ENCODE measurements at regions of chr1 and their contacts with region 1.

Region 1: DNA sequence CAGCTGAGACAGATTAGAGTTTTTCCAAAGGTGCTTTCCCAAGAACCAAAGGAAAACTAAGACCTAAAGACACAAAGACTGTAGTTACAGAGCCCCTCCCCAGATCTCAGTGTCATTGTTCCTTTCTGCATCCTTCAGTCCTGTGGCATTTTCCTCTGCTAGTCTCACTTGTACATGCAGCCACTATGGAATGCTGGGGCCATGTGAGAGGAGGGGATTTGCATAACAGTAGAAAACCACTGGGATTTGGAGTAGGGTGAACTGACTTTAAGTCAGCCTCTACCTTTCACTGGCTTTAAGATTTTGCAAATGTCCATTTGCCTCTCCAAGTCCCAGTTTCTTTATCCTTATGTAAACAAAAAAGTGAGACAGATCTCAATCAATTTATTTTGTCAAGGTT is 119.4 kb upstream of the F3 start:
- DNase-seq: no peak
- ATAC-seq: no peak
- H3K4me3 ChIP-seq: no peak overlapping the region
- H3K27ac ChIP-seq: peak overlapping the region in 1 of 10 donors; percentile 6
- H3K4me1 ChIP-seq: peaks cover 0 to 22% (median 13%) of the 10 kb centered on the region in 9 donors
- H3K27me3 ChIP-seq: no peaks in the 10 kb centered on the region
- CTCF ChIP-seq: no peak

Region 2: DNA sequence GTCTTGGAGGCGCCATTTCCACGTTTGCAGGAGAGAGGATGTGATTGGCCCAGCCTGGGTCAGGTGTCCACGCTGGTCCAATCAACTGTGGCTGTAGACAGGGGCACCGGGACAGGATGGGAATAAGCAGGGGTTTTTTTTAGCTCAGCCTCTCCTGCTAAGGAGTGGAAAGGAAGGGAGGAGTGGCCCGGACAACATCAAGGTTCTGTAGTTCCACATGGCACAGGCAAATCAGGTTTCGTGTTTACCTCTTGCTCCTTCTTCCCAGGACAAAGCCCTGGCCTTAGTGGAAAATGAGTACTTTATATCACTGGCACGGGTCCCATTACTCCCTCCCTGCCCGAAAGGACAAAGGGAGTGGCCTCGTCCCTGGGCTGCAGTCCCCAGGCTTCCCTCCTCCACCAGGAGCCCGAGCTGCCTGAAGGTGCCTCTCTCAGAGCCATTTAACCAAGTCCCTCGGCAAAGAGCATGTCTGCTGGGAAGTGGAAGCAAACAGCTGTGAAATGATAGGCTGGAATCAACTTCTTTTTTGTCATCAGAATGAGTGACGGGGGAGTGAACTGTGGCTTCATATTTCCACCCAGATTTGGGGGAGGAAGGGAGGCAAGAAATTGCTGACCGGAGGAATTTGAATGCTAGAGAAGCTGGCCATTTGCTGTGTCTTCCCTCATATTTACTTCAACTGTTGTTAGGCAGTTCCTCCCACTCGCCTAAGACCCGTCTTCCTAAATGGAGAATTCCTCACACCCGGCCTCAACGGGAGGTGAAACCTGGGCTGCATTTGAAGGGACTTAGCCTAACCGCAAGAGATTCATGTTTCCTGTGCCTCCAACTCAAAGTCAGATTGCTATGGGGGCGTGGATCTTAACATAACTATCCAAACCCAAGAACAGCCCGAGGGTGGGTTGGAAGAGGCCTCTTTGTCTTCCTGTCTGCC is 74.2 kb after region 1 on chr1:
- intact Hi-C with region 1: loop called in 1 of 10 experiments (anchors 5 kb)
- DNase-seq: peak; percentile 29 to 40
- ATAC-seq: peak; percentile 61 to 87 (median 70)
- H3K4me3 ChIP-seq: peak overlapping the region in 3 of 10 donors; percentile 7 to 18 (median 9)
- H3K27ac ChIP-seq: peak overlapping the region in 8 of 10 donors; percentile 6 to 77 (median 32)
- H3K4me1 ChIP-seq: peaks cover 0 to 33% (median 15%) of the 10 kb centered on the region in 9 donors
- H3K27me3 ChIP-seq: no peaks in the 10 kb centered on the region
- CTCF ChIP-seq: no peak

Measured in heart right ventricle (tissue), 16 donors.